Activated T-helper 1 cell treated with anti-CD3 and anti-CD28 coated beads, Interleukin-12 subunit alpha, Interleukin-12 subunit beta, Interleukin-2, Interleukin-4 antibody, amounts not matched to agents 30 ng/mL and 10 ng/mL and 1 ng/mL, durations not matched to agents 14 hours and 24 hours and 36 hours (primary cell): ENCODE measurements at regions of chr16 and their contacts with region 1.

Region 1: DNA sequence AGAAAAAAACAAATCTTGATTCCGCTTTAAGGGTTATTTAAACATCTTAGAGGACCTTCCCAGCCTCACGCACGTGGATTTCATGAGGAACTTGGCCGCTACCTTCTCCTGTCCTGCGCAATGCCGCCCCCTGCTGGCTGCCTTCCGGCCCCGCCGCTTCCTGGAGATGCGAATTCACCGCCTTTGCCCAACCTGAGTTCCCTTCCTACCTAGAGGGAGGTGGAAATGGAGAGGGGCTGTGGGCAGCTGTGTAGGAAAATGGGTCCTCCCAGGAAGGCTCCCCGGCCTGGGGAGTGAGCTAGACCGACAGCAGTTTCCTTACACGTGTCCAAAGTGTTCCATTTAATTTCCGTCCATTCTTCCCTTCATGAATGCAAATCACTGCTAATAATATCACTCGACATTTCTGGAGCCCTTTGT is 1.0 kb upstream of the ABCC12 start:
- DNase-seq: peak; percentile 66
- H3K4me3 Mint-ChIP-seq: no peak overlapping the region
- H3K27ac Mint-ChIP-seq: peak overlapping the region; percentile 31
- H3K4me1 Mint-ChIP-seq: peaks cover 31% of the 10 kb centered on the region
- H3K27me3 Mint-ChIP-seq: peaks cover 9% of the 10 kb centered on the region

Region 2: DNA sequence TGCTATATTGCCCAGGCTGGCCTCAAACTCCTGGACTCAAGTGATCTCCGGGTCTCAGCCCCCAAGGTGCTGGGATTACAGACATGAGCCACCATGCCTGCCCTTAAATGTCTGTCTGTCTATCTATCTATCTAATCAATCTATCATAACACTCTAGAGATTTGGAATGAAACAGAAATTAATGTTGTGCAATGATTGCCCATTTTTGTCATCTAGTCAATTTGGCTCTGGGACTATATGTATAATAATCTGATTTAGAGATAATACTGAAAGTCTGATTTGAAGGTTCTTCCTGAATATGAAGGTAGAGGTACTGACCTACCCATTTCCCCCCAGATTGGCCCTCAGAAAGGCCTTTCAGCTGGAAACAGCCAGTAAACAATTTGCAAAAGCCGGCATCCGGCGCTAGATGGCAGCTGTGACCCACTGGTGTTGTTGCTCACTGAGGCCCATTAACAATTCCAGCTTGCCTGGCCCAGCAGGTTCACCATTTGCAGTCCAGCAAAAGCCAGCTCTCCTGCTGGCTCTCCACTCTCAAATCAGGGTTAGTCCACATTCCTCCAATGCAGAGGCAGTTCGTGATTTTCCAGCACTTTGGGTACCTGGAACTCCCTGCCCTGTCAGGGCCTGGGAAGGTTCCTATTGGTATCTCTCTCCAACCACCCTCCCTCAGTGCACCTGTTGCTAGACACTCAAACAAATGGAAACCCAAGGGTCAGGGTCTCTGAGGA is 1302.9 kb before region 1 on chr16:
- intact Hi-C with region 1: loop called (anchors 5 kb)
- DNase-seq: peak; percentile 62
- H3K4me3 Mint-ChIP-seq: no peak overlapping the region
- H3K27ac Mint-ChIP-seq: no peak overlapping the region
- H3K4me1 Mint-ChIP-seq: no peaks in the 10 kb centered on the region
- H3K27me3 Mint-ChIP-seq: peaks cover 1% of the 10 kb centered on the region

Region 3: DNA sequence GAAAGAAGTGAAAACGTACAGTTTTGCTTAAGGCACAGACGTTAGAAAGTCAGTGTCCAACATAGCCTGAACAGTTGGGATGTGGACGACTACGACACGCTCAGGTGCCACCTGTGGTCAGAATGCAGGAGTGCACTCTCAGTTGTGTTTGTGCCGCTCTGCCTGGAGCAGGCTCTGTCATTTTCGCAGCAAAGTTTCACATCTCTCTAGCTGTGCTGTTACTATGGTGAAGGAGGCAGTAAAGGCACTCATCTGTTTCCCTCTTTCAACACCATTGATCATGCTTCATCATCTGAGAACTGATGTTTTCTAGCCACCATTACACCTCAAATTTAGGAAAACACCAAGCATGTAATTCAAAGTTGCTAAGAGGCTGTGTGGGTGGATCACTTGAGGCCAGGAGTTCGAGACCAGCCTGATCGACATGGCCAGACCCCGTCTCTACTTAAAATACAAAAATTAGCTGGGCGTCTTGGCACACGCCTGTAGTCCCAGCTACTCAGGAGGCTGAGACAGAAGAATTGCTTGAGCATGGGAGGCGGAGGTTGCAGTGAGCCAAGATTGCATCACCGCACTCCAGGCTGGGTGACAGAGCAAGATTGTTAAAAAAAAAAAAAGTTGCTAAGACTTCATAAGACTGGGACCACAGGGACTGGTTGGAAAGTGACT is 1138.4 kb before region 1 on chr16:
- intact Hi-C with region 1: loop called (anchors 1 kb)
- DNase-seq: peak; percentile 24
- H3K4me3 Mint-ChIP-seq: no peak overlapping the region
- H3K27ac Mint-ChIP-seq: no peak overlapping the region
- H3K4me1 Mint-ChIP-seq: peaks cover 23% of the 10 kb centered on the region
- H3K27me3 Mint-ChIP-seq: peaks cover 4% of the 10 kb centered on the region

Region 4: GRCh38 chr16:47460711-47461597 is 695.8 kb before region 1 on chr16 and contains the starts of genes ITFG1 and PHKB:
- intact Hi-C with region 1: loop called (anchors 1 kb)
- DNase-seq: peak; percentile 95
- H3K4me3 Mint-ChIP-seq: peak within 1 kb of the TSS; percentile 90
- H3K27ac Mint-ChIP-seq: peak within 1 kb of the TSS; percentile 97
- H3K4me1 Mint-ChIP-seq: peaks cover 51% of the 10 kb centered on the region
- H3K27me3 Mint-ChIP-seq: no peaks in the 10 kb centered on the region
- total RNA-seq, gene ITFG1: 25.4 and 27.6 TPM in 2 replicates
- total RNA-seq, gene PHKB: 24.4 and 26.6 TPM in 2 replicates

Region 5: GRCh38 chr16:48054881-48055601 is 101.8 kb before region 1 on chr16:
- intact Hi-C with region 1: loop called (anchors 5 kb)
- DNase-seq: peak; percentile 11
- H3K4me3 Mint-ChIP-seq: no peak overlapping the region
- H3K27ac Mint-ChIP-seq: no peak overlapping the region
- H3K4me1 Mint-ChIP-seq: peaks cover 8% of the 10 kb centered on the region
- H3K27me3 Mint-ChIP-seq: peaks cover 25% of the 10 kb centered on the region